Left ventricle myocardium inferior (tissue), 1 donor: ENCODE measurements at regions of chr13 and their contacts with region 1.

Region 1: DNA sequence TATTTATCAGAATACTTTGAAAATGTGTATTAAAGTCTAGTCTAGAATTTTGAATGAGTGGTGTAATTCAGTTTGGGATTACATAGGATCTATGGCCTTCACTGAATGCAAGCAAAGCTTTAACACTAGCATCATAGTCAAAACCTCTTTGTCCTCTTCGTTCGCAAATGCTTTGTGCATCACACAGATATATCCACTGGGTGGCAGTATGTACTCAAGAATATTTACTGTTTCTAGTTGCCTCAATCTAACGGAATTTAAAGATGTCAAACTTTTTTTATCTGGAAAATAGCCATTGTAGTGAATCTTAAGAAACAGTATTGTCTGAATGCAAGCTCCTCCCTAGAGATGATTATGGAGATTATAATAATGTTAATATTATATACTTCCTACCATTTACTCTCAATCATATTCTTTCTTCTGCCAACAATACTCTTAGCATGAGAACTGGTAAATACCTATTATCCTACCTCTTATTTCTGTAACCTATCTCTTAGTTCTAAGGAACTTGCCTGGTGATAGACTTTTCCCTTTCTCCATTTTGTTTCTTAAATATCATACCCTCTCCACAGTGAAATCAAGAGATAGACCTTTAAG is 25.8 kb downstream of the LACC1 start:
- DNase-seq: no peak
- H3K4me3 ChIP-seq: no peak overlapping the region
- H3K27ac ChIP-seq: no peak overlapping the region
- H3K4me1 ChIP-seq: peaks cover 18% of the 10 kb centered on the region
- H3K27me3 ChIP-seq: no peaks in the 10 kb centered on the region
- CTCF ChIP-seq: peak; percentile 86

Region 2: GRCh38 chr13:43583321-43583720 is 322.2 kb before region 1 on chr13:
- intact Hi-C with region 1: no loop called
- DNase-seq: no peak
- H3K4me3 ChIP-seq: no peak overlapping the region
- H3K27ac ChIP-seq: no peak overlapping the region
- H3K4me1 ChIP-seq: no peaks in the 10 kb centered on the region
- H3K27me3 ChIP-seq: no peaks in the 10 kb centered on the region
- CTCF ChIP-seq: no peak

Region 3: DNA sequence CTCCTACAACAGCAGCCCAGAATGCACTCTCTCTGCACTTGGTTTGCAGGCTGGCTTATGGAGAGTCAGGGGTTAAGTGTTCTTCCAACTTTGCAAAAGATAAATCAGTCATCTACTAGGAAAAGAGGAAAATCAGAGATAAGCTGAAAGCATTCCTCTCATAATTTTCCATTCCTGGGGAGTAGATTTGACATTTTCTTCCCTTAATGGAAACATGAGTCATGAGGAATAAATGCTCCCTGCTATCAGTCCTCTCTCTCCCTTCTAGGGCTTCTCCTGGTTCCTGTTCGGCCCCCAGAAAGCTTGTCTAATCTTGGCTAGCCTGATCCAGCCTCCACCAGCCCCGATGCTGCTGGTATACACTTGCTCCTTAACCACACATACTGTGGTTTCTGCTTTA is 90.3 kb before region 1 on chr13:
- intact Hi-C with region 1: no loop called
- DNase-seq: no peak
- H3K4me3 ChIP-seq: no peak overlapping the region
- H3K27ac ChIP-seq: peak overlapping the region; percentile 36
- H3K4me1 ChIP-seq: peaks cover 11% of the 10 kb centered on the region
- H3K27me3 ChIP-seq: no peaks in the 10 kb centered on the region
- CTCF ChIP-seq: no peak

Region 4: GRCh38 chr13:43981091-43981490 is 75.6 kb after region 1 on chr13:
- intact Hi-C with region 1: no loop called
- DNase-seq: no peak
- H3K4me3 ChIP-seq: no peak overlapping the region
- H3K27ac ChIP-seq: peak overlapping the region; percentile 28
- H3K4me1 ChIP-seq: peaks cover 18% of the 10 kb centered on the region
- H3K27me3 ChIP-seq: no peaks in the 10 kb centered on the region
- CTCF ChIP-seq: no peak

Region 5: DNA sequence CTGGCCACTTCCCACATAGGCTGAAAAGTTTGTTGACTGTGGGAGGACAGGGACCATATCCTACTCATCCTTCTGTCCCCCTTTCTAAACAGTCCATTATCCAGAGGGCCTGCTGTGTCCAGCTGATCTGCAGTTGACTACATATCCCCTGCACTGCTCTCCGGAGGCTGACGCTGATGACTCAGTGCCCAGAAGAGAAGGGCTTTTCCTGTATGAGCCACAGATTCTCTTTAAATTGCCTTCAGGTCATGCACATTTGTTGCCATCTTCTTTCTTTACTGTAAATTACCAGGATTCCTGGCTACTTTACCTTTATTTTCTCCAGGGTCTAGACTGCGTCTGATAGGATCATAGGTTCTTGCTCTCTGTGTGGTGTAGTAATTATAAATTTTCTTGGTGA is 99.3 kb after region 1 on chr13:
- intact Hi-C with region 1: no loop called
- DNase-seq: no peak
- H3K4me3 ChIP-seq: no peak overlapping the region
- H3K27ac ChIP-seq: no peak overlapping the region
- H3K4me1 ChIP-seq: peaks cover 14% of the 10 kb centered on the region
- H3K27me3 ChIP-seq: no peaks in the 10 kb centered on the region
- CTCF ChIP-seq: no peak

Region 6: GRCh38 chr13:44050450-44051063 is 145.0 kb after region 1 on chr13:
- intact Hi-C with region 1: loop called (anchors 5 kb)
- DNase-seq: no peak
- H3K4me3 ChIP-seq: no peak overlapping the region
- H3K27ac ChIP-seq: no peak overlapping the region
- H3K4me1 ChIP-seq: peaks cover 8% of the 10 kb centered on the region
- H3K27me3 ChIP-seq: no peaks in the 10 kb centered on the region
- CTCF ChIP-seq: peak; percentile 89

Region 7: DNA sequence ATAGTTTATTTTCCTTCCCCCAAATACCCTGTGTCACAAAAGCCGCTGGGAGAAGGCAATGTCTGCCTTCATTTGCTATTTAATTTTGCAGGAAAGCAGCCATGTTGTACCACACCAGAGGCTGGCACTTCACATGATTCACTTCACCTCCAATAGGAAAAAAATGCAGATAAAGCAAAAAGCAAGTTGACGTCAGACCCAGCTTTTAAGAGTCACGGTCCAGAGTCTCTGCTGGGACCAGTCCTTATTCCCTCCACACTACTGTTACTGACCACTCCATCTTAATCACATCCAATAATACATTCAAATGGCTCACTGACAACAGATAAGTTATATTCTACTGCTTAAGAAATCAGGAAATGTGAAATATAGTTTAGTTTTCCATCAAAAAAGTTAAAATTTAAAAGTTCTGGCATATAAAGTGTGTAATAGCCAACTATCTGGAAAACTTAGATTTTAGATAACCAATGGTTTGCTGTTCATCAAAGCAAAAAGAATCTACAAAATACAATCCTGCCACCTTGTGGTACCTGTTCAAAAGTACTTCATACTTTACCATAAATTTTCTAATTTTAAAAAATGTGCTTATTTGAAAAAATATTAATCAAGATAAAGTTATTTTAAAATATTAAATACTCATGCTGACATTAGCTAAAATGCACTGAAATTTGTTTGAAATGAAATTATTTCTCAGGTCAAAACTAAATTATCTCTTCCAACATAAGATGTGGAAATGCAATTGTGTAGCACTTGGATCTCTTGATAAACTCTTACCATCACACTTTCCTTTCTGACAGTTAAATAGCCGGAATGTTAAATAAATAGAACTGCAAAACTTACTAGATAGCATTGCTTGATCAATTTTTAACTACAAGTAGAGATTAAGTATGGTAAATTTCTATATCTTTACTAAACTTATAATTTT is 565.4 kb after region 1 on chr13:
- intact Hi-C with region 1: loop called (anchors 2 kb)
- DNase-seq: no peak
- H3K4me3 ChIP-seq: no peak overlapping the region
- H3K27ac ChIP-seq: no peak overlapping the region
- H3K4me1 ChIP-seq: peaks cover 12% of the 10 kb centered on the region
- H3K27me3 ChIP-seq: no peaks in the 10 kb centered on the region
- CTCF ChIP-seq: peak; percentile 67